Right lobe of liver (tissue), 6 donors: ENCODE measurements at regions of chr11 and their contacts with region 1.

Region 1: DNA sequence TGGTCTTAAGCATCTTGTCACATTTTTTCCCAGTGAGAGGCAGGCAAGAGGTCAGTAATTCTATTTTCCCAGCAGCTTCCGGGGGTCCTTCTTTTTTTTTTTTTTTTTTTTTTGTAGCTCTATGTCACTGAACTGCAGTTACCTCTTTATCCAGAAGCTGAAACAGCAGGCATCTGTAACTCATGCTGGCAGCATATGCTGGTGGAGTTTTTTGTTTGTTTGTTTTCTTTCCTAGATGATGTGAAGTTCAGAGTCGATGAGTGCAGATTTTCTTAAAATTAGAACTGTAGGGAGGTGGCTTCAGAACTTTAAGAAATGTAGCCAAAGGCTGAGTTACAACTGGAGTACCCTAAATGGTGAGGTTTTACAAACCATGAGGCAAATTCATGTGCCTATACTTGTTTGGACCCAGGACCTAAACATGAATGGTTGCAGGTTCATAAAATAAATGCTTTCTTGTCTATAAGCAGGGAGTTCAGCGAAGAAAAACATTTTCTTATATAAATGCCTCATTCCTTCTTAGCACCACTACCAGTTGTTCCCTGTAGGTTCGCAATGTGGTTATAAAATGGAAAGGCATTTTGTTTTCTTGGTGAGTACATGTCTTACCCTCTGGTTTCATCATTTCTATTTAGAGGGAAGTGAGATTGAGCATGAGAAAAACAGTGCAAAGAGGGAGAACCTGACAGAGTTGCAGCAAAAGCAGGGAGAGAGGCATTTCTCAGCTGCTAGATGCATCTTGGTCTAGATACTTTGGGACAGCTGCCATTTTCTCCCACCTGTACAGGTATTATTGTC is 84.0 kb downstream of the TRIM44 start:
- DNase-seq: no peak
- ATAC-seq: peak in 1 of 4 donors; percentile 16
- H3K4me3 ChIP-seq: no peak overlapping the region
- H3K27ac ChIP-seq: no peak overlapping the region
- H3K4me1 ChIP-seq: peaks cover 0 to 34% (median 10%) of the 10 kb centered on the region in 4 donors
- H3K27me3 ChIP-seq: no peaks in the 10 kb centered on the region
- CTCF ChIP-seq: no peak
- POLR2A ChIP-seq: no peak

Region 2: DNA sequence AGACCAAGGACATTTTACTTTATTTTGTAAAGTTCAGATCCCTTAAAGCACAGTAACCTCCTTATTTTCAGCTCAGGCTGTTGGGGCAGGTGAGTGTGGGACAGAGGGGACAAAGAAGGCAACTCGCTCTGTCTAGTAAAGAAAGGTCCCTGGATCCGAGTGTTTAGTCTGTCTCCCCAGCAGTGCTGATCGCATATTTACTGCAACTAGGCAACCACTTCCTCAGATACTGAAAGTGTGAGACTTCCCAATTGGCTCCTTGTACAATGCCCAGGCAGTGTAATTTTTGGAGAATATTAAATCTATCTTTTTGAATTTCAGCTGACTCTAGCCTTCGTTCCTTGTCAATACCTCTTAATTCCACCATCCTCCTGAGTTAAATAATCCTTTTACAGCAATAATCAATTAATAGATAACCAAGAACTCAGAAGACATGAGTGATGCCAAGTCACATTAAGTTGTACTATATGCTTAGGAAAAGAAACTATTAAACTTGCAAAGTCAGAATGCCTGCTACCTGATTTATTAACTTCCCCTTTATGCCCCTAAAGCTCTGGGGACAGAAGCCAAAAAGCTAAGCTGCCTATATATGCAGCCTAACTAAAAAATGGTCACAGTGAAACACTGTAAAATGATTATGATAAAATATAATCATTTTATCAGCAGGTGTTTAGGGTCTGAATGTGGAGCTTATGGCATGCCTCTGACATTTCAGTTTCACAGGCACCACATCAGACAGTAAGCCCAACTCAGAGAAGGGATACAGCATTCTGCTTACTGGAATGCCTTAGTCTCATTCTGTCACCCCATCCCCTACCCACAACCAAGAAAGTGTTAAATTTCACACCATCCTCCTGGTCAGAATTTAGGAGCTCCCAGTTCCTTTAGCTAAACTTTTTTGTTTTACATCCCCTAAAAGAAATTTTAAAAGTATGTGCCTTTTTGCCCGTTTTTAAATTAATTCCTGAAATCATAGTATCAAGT is 54.7 kb after region 1 on chr11:
- intact Hi-C with region 1: loop called in 1 of 2 experiments (anchors 10 kb)
- DNase-seq: no peak
- ATAC-seq: peak; percentile 35 to 65 (median 56)
- H3K4me3 ChIP-seq: no peak overlapping the region
- H3K27ac ChIP-seq: no peak overlapping the region
- H3K4me1 ChIP-seq: peaks cover 0 to 16% (median 5%) of the 10 kb centered on the region in 4 donors
- H3K27me3 ChIP-seq: no peaks in the 10 kb centered on the region
- CTCF ChIP-seq: no peak
- POLR2A ChIP-seq: no peak

Region 3: GRCh38 chr11:35815556-35816315 is 69.2 kb after region 1 on chr11:
- intact Hi-C with region 1: no loop called
- DNase-seq: peak in 1 of 3 donors; percentile 79
- ATAC-seq: peak; percentile 72 to 90 (median 82)
- H3K4me3 ChIP-seq: no peak overlapping the region
- H3K27ac ChIP-seq: peak overlapping the region in 1 of 3 donors; percentile 70
- H3K4me1 ChIP-seq: peaks cover 0 to 53% (median 14%) of the 10 kb centered on the region in 4 donors
- H3K27me3 ChIP-seq: no peaks in the 10 kb centered on the region
- CTCF ChIP-seq: no peak
- POLR2A ChIP-seq: no peak

Region 4: GRCh38 chr11:35873721-35874120 is 127.2 kb after region 1 on chr11:
- intact Hi-C with region 1: no loop called
- DNase-seq: no peak
- ATAC-seq: no peak
- H3K4me3 ChIP-seq: no peak overlapping the region
- H3K27ac ChIP-seq: no peak overlapping the region
- H3K4me1 ChIP-seq: no peaks in the 10 kb centered on the region
- H3K27me3 ChIP-seq: no peaks in the 10 kb centered on the region
- CTCF ChIP-seq: no peak
- POLR2A ChIP-seq: no peak